A549 (cell line): ENCODE measurements at regions of chr19 and their contacts with region 1.

Region 1: DNA sequence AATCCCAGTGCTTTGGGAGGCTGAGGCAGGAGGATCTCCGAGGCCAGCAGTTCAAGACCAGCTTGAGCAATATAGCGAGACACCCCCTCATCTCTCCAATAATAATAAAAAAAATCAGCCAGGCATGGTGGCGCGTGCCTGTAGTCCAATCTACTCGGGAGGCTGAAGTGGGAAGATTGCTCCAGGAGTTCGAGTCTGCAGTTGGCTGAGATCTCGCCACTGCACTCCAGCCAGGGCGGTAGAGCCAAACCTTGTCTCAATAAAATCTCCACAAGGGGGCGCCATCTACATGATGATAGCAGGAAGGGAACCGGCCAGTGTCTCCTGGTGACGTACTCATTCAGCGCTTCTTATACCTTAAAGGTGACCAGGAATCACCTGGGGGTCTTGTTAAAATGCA is 13.6 kb upstream of the C5AR1 start:
- DNase-seq: peak; percentile 88
- ATAC-seq: peak; percentile 95 to 99
- H3K4me3 ChIP-seq: no peak overlapping the region
- H3K27ac ChIP-seq: peak overlapping the region; percentile 44 to 59; a peak in 4 of 6 replicates
- H3K4me1 ChIP-seq: peaks cover 5% of the 10 kb centered on the region; the same call in 1 of the 3 replicates
- CTCF ChIP-seq: peak; percentile 98
- EP300 ChIP-seq: no peak
- POLR2A ChIP-seq: no peak
- RAD21 ChIP-seq: peak; percentile 97 to 99

Region 2: DNA sequence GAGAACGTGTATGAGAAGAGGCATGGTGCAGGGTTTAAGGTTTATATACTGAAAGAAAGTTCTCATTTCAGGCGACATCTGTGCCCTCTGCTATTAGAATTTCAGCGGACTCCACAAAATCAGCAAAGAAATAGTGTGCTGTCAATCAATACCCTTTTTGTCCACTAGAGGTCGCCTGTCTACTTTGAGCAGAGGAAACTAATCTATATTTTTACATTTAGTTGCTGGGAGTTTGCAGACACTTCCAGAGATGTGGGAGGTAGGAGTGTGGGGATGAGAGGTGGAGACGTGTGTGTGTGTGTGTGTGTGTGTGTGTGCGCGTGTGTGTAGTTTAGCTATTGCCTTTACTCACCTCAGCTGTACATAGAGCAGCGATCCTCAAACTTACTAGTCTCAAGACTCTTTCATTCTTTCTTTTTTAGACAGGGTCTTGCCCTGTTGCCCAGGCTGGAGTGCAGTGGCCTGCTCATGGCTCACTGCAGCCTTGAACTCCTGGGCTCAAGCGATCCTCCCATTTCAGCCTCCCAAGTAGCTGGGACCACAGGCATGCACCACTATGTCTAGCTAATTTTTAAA is 11.6 kb before region 1 on chr19:
- CTCF ChIA-PET with region 1: interaction called, 160 read pairs
- POLR2A ChIA-PET with region 1: interaction called, 5 read pairs
- DNase-seq: peak; percentile 50 to 77
- ATAC-seq: peak; percentile 34 to 35; a peak in 3 of 6 replicates
- H3K4me3 ChIP-seq: no peak overlapping the region
- H3K27ac ChIP-seq: no peak overlapping the region
- H3K4me1 ChIP-seq: peaks cover 12% of the 10 kb centered on the region
- CTCF ChIP-seq: peak; percentile 92
- EP300 ChIP-seq: no peak
- POLR2A ChIP-seq: no peak
- RAD21 ChIP-seq: peak; percentile 71 to 78

Region 3: GRCh38 chr19:47336853-47337279 is 40.8 kb after region 1 on chr19:
- CTCF ChIA-PET with region 1: interaction called, 10 read pairs
- POLR2A ChIA-PET with region 1: no interaction called
- DNase-seq: peak in 1 of 2 experiments; percentile 32
- ATAC-seq: peak; percentile 13 to 36; a peak in 3 of 6 replicates
- H3K4me3 ChIP-seq: no peak overlapping the region
- H3K27ac ChIP-seq: peak overlapping the region in 1 of 2 experiments; percentile 54; a peak in 3 of 6 replicates
- H3K4me1 ChIP-seq: peaks cover 24% of the 10 kb centered on the region
- CTCF ChIP-seq: no peak
- EP300 ChIP-seq: no peak
- POLR2A ChIP-seq: no peak
- RAD21 ChIP-seq: no peak

Region 4: GRCh38 chr19:47357788-47358680 is 62.0 kb after region 1 on chr19:
- CTCF ChIA-PET with region 1: interaction called, 117 read pairs
- POLR2A ChIA-PET with region 1: no interaction called
- DNase-seq: peak; percentile 49 to 72
- ATAC-seq: peak; percentile 75 to 86
- H3K4me3 ChIP-seq: no peak overlapping the region
- H3K27ac ChIP-seq: no peak overlapping the region
- H3K4me1 ChIP-seq: no peaks in the 10 kb centered on the region
- CTCF ChIP-seq: peak; percentile 51; the same call in 2 of the 3 replicates
- EP300 ChIP-seq: no peak
- POLR2A ChIP-seq: no peak
- RAD21 ChIP-seq: peak; percentile 29 to 35; a peak in 1 of 5 replicates

Region 5: DNA sequence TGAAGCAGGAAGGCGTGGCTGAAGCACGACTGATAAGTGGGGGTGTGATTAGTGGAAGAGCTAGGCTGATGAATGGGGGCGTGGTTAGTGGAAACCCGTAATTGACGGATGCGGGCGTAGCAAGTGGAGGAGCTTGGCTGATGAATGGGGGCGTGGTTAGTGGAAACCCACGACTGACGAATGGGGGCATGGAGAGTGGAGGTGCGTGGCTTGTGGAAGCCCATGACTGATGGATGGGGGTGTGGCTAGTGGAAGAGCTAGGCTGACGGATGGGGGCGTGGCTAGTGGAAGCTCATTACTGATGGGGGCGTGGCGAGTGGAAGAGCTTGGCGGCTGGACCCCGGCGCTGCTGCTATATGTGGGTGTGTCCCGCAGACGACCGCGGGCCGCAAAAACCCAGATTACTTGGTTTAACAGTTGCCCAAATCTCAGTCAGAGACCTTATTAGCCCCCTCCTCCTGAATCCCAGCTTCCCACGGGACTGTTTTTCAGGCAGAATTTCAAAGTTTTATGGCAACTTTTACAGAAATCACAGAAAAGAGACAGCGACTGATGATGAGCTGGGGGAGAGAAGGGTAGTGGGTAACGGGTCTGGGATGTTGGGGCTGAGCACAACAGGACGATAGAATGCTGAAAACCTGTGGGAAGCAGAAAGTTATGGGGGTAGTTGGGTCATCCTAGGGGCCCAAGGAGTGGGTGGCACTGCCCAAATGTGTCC is 132.3 kb after region 1 on chr19:
- CTCF ChIA-PET with region 1: interaction called, 48 read pairs
- POLR2A ChIA-PET with region 1: no interaction called
- DNase-seq: peak; percentile 95 to 98
- ATAC-seq: peak; percentile 75 to 85
- H3K4me3 ChIP-seq: peak overlapping the region; percentile 42
- H3K27ac ChIP-seq: peak overlapping the region in 1 of 2 experiments; percentile 43; a peak in 2 of 6 replicates
- H3K4me1 ChIP-seq: peaks cover 20% of the 10 kb centered on the region
- CTCF ChIP-seq: no peak
- EP300 ChIP-seq: no peak
- POLR2A ChIP-seq: no peak
- RAD21 ChIP-seq: no peak